ENCODE measurements at regions of chr5 and their contacts with region 1.

Region 1: DNA sequence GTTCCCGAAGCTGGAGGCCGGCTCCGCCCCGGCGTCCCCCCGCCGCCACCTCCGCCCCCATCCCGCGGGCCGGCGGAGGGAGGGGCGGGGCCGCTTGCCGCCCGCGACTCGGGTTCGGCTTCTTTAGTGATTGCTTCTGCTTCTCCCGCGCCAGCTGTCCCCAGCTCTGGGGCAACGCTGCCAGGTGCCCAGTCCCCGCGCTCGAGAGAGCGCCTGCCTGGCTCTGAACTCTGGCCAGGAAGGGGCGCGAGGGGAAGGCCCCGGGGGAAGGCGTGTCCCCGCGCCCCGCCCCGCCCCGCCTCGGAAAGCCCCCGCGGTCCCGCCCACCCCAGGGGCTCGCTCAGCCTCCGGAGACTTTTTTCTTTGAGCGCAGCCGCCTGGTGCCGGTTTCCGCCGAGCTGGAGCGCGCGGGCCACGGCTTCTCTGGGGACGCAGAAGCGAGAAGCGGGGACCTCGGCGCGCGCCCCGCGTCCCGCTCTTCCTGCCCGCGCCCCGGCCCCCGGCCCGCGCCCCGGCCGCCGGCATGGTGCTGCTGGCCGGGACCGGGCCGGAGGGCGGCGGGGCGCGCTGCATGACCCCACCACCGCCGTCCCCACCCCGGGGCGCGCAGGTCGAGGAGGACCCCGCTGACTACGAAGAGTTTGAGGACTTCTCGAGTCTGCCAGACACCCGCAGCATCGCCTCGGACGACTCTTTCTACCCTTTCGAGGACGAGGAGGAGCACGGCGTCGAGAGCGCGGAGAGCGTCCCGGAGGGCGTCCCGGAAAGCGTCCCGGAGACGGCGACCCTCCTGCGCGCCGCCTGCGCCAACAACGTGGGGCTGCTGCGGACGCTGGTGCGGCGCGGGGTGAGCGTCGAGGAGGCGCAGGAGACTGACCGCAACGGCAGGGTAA is at the start of gene ANKRD33B:
- DNase-seq: peak; percentile 49 to 85 (median 67)
- ATAC-seq: peak; percentile 82 to 89 (median 84)
- H3K4me3 ChIP-seq: peak within 1 kb of the TSS; percentile 57 to 75
- H3K4me3 Mint-ChIP-seq: peak within 1 kb of the TSS; percentile 77 to 92 (median 85)
- H3K27ac ChIP-seq: no peak within 1 kb of the TSS
- H3K27ac Mint-ChIP-seq: no peak within 1 kb of the TSS
- H3K4me1 ChIP-seq: peaks cover 0 to 31% of the 10 kb centered on the region in 2 experiments
- H3K4me1 Mint-ChIP-seq: peaks cover 12 to 28% (median 18%) of the 10 kb centered on the region in 3 donors
- H3K27me3 ChIP-seq: peaks cover 0 to 30% of the 10 kb centered on the region in 2 experiments
- H3K27me3 Mint-ChIP-seq: peaks cover 0 to 7% of the 10 kb centered on the region in 2 donors
- total RNA-seq, gene ANKRD33B: 1.0 to 4.1 (median 2.4) TPM

Region 2: DNA sequence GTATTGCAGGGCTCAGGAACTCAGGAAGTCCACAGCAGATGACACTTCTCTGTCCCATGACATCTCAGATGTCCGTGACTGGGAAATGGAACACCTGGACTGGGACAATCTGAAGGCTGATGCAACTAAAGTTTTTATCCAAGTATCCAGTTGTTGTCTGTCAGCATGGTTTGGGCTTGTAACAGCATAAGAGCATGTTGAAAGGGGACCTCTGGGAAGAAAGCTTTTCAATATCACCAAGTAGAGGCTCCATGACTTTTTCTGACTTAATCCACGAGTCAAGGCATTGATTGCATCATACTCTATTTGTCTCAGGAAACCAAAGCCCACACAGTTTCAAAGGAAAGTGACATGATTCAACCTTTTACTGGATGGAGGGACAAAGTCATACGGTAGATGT is 1887.5 kb before region 1 on chr5:
- CTCF ChIA-PET with region 1: no interaction called
- POLR2A ChIA-PET with region 1: no interaction called
- DNase-seq: no peak
- ATAC-seq: no peak
- H3K4me3 ChIP-seq: no peak overlapping the region
- H3K4me3 Mint-ChIP-seq: no peak overlapping the region
- H3K27ac ChIP-seq: no peak overlapping the region
- H3K27ac Mint-ChIP-seq: no peak overlapping the region
- H3K4me1 ChIP-seq: no peaks in the 10 kb centered on the region
- H3K4me1 Mint-ChIP-seq: no peaks in the 10 kb centered on the region
- H3K27me3 ChIP-seq: no peaks in the 10 kb centered on the region
- H3K27me3 Mint-ChIP-seq: no peaks in the 10 kb centered on the region

Region 3: DNA sequence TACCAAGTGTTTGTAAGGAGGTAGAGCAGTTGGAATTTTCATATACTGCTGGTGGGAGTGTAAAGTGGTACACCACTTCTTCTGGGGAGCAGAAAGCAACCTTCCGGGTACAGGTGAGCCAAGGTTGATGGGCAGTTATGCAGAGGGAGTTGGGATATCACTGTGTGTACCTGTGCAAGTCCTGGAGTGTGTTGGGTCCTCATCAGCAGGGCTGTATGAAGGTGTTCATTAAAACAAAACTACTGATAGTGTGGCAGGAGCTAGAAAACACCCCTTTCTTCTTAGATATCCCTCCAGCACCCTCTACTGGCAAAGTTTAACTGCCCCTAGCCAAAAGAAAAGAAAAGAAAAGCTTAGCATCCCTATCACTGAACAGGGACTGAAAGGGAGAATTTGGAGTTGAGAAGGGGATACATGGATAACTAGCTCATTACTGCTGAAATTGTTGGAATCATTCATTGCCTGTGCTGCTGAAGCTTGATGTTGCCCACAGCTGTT is 200.0 kb before region 1 on chr5:
- CTCF ChIA-PET with region 1: no interaction called
- POLR2A ChIA-PET with region 1: interaction called in 1 of 2 experiments, 11 read pairs
- DNase-seq: peak in 1 of 35 experiments; percentile 55
- ATAC-seq: peak in 2 of 4 experiments; percentile 23 to 52
- H3K4me3 ChIP-seq: no peak overlapping the region
- H3K4me3 Mint-ChIP-seq: no peak overlapping the region
- H3K27ac ChIP-seq: no peak overlapping the region
- H3K27ac Mint-ChIP-seq: no peak overlapping the region
- H3K4me1 ChIP-seq: peaks cover 5 to 25% of the 10 kb centered on the region in 2 experiments
- H3K4me1 Mint-ChIP-seq: peaks cover 84 to 89% (median 87%) of the 10 kb centered on the region in 3 donors
- H3K27me3 ChIP-seq: no peaks in the 10 kb centered on the region
- H3K27me3 Mint-ChIP-seq: no peaks in the 10 kb centered on the region

Region 4: GRCh38 chr5:10498350-10498749 is 65.8 kb before region 1 on chr5:
- CTCF ChIA-PET with region 1: no interaction called
- POLR2A ChIA-PET with region 1: no interaction called
- DNase-seq: no peak
- ATAC-seq: no peak
- H3K4me3 ChIP-seq: no peak overlapping the region
- H3K4me3 Mint-ChIP-seq: no peak overlapping the region
- H3K27ac ChIP-seq: no peak overlapping the region
- H3K27ac Mint-ChIP-seq: no peak overlapping the region
- H3K4me1 ChIP-seq: no peaks in the 10 kb centered on the region
- H3K4me1 Mint-ChIP-seq: no peaks in the 10 kb centered on the region
- H3K27me3 ChIP-seq: peaks cover 0 to 9% of the 10 kb centered on the region in 2 experiments
- H3K27me3 Mint-ChIP-seq: no peaks in the 10 kb centered on the region